GM10248 (cell line): ENCODE measurements at regions of chr1 and their contacts with region 1.

Region 1: GRCh38 chr1:78617615-78618026 is 2.6 kb upstream of the IFI44L start:
- DNase-seq: peak; percentile 35
- CTCF ChIP-seq: peak; percentile 80

Region 2: DNA sequence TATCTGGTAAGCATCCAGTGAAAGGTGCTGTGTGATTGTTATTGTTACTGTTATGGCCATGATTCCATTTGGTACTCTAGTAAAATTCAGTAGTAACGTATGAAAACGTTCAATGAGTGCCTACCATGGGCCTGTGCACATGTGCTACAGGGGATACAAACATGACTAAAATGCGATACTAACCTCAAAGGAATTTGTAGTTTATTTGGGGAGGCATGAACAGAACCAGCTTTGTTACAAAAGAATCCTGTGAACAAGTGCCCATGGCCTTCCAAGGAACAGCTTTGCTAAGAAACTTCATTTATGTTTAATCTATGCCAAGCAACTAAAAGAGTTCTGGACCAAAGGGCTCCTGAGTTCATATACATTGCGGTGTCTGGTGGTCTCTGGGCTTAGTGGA is 98.2 kb before region 1 on chr1:
- CTCF ChIA-PET with region 1: no interaction called
- POLR2A ChIA-PET with region 1: no interaction called
- DNase-seq: no peak
- CTCF ChIP-seq: no peak

Region 3: GRCh38 chr1:78607334-78607927 is 10.2 kb before region 1 on chr1:
- CTCF ChIA-PET with region 1: interaction called, 13 read pairs
- POLR2A ChIA-PET with region 1: no interaction called
- DNase-seq: peak; percentile 13
- CTCF ChIP-seq: peak; percentile 42

Region 4: DNA sequence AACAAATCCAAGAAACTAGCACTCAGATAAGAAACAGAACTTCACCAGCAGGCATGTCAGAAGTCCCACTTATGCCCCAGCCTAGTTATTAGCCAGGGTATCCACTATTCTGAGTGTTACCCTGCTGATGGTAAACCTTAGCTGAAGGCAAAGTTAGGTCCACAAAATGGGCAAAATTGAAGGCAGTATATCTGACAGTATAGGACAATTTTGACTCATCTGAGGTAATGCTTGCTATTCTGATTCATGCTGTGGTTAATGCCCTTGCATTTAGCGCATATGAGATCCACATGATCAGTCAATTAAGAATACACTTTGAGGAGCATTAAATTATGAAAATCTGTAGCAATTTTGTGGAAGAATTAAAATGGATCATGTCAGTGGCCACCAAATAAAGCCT is 47.1 kb after region 1 on chr1:
- CTCF ChIA-PET with region 1: interaction called, 11 read pairs
- POLR2A ChIA-PET with region 1: no interaction called
- DNase-seq: no peak
- CTCF ChIP-seq: no peak

Region 5: GRCh38 chr1:78676347-78676982 is 58.8 kb after region 1 on chr1:
- CTCF ChIA-PET with region 1: interaction called, 52 read pairs
- POLR2A ChIA-PET with region 1: no interaction called
- DNase-seq: peak; percentile 35
- CTCF ChIP-seq: peak; percentile 85

Region 6: DNA sequence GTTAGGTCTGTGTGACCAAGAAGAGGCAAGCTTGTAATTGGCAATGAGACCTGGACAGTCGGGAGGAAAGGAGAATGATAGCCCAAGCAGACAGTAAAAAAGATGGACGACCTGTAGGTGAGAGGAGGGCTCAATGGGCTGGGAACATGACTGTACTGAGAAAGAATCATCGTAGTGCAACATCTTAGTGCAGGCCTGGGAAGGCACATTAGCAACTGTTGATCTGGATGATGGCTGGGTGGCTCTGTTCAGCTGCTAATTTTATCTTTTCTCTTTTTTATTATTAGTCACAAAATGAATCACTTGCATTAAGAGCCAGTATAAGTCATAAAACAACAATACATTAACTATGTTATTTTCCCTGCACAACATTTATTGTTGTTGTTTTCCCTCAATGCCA is 64.9 kb after region 1 on chr1:
- CTCF ChIA-PET with region 1: interaction called, 16 read pairs
- POLR2A ChIA-PET with region 1: no interaction called
- DNase-seq: no peak
- CTCF ChIP-seq: no peak